AG04450 (cell line): ENCODE measurements at regions of chr7 and their contacts with region 1.

Region 1: DNA sequence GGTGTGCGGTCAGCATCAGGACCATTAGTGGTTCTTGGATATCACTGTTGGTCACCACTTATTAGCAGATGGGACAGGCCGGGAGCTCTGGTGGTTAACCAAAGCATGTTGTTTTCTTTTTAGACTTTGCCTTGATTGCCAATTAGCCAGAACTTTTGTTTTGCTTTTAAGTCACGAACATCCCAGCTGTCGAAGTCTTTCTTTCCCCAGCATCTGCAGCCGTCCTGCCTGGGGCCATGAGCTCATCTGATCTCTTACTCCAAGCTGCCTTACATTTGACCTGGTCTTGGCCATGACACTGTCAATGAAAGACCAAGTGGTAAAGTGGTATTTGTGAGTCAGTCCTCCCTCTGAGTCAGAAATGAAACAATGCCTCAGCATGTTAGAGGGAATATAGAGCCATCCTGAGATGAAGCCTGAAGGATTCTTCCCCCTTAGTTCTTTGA is 53.9 kb upstream of the CREB5 start:
- DNase-seq: peak; percentile 96
- H3K4me3 ChIP-seq: no peak overlapping the region
- H3K27ac ChIP-seq: peak overlapping the region; percentile 89
- H3K27me3 ChIP-seq: no peaks in the 10 kb centered on the region
- CTCF ChIP-seq: no peak

Region 2: GRCh38 chr7:28155019-28155660 is 203.3 kb before region 1 on chr7:
- CTCF ChIA-PET with region 1: no interaction called
- POLR2A ChIA-PET with region 1: no interaction called
- DNase-seq: no peak
- H3K4me3 ChIP-seq: no peak overlapping the region
- H3K27ac ChIP-seq: no peak overlapping the region
- H3K27me3 ChIP-seq: no peaks in the 10 kb centered on the region
- CTCF ChIP-seq: no peak

Region 3: GRCh38 chr7:28165961-28166955 is 192.2 kb before region 1 on chr7:
- CTCF ChIA-PET with region 1: no interaction called
- POLR2A ChIA-PET with region 1: no interaction called
- DNase-seq: no peak
- H3K4me3 ChIP-seq: no peak overlapping the region
- H3K27ac ChIP-seq: peak overlapping the region; percentile 89
- H3K27me3 ChIP-seq: no peaks in the 10 kb centered on the region
- CTCF ChIP-seq: no peak

Region 4: DNA sequence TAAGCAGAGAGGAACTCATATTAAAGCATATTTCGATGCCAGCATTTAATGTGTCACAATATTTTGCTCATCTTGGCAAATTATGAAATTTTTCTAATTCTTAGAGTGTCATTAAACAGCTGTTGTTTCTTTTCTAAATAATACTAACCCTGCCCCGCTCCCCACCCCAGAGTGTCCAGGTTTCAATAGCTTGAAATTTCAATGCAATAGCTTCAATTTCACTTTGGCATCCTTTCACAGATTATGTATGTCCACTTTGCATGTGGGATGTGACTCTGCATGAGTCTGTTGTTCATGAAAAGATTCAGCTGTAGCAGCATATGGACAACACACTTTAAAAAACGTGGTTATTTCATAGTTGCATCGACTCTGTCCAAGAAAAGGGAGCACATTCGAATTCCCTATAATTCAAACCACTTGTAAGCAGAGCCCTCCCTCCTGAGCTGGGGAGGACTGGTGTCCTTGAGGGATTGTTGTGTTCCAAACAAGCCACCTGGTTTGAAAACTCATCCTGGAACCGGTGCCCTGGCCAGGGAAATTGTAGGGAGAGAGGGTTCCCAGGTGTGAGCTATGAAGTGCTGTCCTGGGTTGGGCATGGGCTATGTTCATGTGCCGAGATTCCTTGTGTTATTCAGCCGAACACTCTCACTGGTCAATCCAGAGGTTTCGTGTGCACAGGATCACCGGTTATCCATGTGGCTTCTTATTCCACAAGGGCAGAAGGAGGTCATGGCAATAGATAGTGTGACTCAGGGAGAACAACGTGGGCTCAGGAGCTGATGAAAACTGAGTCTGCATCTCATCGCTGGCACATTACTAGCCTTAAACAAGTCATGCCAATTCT is 10.7 kb before region 1 on chr7:
- CTCF ChIA-PET with region 1: interaction called, 9 read pairs
- POLR2A ChIA-PET with region 1: interaction called, 31 read pairs
- DNase-seq: peak; percentile 55
- H3K4me3 ChIP-seq: no peak overlapping the region
- H3K27ac ChIP-seq: peak overlapping the region; percentile 89
- H3K27me3 ChIP-seq: no peaks in the 10 kb centered on the region
- CTCF ChIP-seq: no peak